Posterior vena cava (tissue), 2 donors: ENCODE measurements at regions of chr3 and their contacts with region 1.

Region 1: DNA sequence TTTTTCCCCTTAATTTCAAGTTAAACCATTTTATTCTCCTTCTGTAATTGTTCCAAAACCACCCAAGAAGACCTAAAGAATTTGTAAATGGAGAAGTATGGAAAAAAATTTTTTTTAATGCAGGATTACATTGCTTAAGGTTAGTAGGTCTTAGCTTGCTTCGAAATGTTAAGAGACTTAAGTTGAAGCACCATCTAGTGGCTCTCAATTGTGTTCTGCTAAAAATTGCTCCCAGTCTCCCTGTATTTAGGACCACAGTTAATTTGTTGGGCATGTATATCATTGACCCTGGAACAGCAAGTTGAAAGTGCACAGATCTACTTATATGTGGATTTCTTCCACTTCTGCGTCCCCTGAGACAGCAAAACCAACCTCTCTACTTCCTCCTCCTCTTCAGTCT is 32.4 kb downstream of the CD200R1L start:
- DNase-seq: no peak

Region 2: GRCh38 chr3:112642912-112643506 is 171.3 kb before region 1 on chr3:
- intact Hi-C with region 1: loop called in 1 of 2 experiments (anchors 5 kb)
- DNase-seq: peak; percentile 93

Region 3: DNA sequence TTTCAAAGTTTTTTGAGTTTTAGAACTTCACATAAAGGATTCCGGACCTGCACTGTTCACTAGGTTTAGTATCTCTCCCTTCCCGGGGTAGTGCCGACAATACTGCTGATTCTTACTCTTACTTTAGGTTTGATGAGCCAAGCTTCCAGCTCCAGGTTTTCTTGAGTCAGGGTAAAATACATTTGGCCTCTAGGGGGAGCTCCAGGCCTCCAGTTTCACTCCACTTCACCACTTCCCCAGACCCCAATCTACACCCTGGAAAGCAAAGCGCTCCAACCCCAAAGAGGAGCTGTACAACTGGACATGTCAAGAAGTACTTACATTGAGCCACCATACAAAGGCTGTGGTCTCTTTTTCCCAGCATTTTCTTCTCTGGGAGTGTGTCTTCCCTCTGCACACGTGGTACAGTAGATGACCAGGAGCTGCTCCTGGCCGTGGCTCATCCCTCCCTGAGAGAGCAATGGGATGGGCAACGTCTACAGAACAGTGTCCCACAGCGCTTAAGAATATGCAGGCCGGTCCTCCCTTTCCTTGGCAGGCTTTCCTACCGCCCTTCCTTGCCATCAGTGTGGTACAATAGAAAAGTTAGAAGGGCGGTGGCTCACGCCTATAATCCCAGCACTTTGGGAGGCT is 79.4 kb before region 1 on chr3:
- intact Hi-C with region 1: loop called in 1 of 2 experiments (anchors 10 kb)
- DNase-seq: no peak

Region 4: DNA sequence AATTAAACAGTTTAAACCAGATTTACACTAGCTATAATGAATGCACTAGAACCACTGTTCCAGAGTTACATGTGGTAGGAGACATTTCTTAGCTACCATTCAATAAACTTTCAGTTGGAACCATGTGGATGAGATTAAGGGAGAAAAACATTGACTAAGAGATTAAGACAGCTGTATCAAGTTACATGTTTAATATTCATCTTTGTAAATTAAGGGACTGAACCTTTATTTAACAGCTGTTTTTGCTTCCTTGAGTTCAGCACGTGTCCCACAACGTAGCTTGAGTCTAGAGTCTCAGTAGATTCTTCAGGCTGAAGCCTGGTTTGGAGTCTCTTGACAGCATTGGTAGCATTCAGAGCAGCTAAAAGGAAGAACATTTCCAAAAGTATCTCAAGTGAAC is 654.3 kb after region 1 on chr3:
- intact Hi-C with region 1: no loop called
- DNase-seq: no peak